ENCODE measurements at regions of chr12 and their contacts with region 1.

Region 1: DNA sequence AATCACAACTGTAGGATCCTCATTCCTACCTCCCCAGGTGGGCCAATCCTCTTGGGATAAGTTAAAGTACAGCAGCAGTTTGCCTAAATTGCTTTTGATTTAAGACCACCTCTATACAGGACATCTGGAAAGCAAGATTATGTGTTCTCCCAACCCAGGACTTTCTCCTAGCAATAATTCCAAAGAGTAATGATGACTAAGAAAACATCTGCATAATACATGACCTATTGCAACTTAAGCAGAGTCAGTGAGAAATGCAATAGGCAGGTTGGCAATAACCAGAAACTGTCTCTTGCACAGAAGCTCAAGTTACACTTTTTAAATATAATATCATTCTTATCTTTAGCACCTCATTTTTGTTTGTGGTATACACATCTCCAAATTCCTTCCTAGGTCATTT is 275.4 kb downstream of the TRHDE start:
- DNase-seq: no peak
- H3K4me3 Mint-ChIP-seq: no peak overlapping the region
- H3K27ac Mint-ChIP-seq: no peak overlapping the region
- H3K4me1 Mint-ChIP-seq: no peaks in the 10 kb centered on the region
- H3K27me3 Mint-ChIP-seq: no peaks in the 10 kb centered on the region
- CTCF ChIP-seq: no peak

Region 2: GRCh38 chr12:72346363-72346944 is 201.1 kb before region 1 on chr12:
- CTCF ChIA-PET with region 1: no interaction called
- intact Hi-C with region 1: loop called (anchors 10 kb)
- DNase-seq: peak; percentile 86
- H3K4me3 Mint-ChIP-seq: no peak overlapping the region
- H3K27ac Mint-ChIP-seq: no peak overlapping the region
- H3K4me1 Mint-ChIP-seq: peaks cover 8% of the 10 kb centered on the region
- H3K27me3 Mint-ChIP-seq: no peaks in the 10 kb centered on the region
- CTCF ChIP-seq: peak; percentile 45

Region 3: DNA sequence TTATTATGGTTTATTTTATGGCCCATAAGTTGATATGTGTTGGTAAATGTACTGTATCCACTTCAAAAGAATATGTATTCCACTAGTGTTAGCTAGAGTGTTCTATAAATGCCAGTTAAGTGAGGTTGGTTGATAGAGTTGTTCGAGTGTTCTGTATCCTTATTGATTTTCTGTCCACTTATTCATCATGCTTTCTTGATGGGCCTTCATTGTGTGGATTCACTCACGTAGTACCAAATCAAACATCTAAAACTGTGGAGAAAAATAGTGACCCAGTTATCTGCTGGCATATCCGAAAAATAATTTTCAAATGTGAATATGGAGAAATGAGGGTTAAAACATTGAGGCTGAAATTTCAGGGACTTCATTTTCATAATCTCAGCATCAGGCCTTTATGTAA is 45.0 kb before region 1 on chr12:
- CTCF ChIA-PET with region 1: no interaction called
- intact Hi-C with region 1: loop called (anchors 2 kb)
- DNase-seq: no peak
- H3K4me3 Mint-ChIP-seq: no peak overlapping the region
- H3K27ac Mint-ChIP-seq: no peak overlapping the region
- H3K4me1 Mint-ChIP-seq: no peaks in the 10 kb centered on the region
- H3K27me3 Mint-ChIP-seq: no peaks in the 10 kb centered on the region
- CTCF ChIP-seq: no peak

Region 4: DNA sequence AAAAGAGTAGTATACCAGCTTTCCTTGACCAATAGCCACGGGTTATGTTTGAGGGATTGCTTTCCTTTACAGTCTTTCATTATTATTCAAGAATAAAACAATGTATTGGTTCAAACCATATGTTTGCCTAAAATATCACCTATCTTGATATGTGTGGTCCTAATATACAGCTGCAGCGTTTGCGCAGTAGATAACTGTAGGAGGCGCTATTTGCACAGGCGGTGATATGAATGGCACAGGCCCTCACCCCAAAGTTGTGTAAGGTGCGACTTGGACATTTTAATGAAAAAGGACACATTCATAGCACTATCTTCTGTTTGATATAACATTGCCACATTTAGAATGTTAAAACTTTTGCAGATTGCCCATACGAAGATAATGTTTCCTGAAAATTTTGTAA is 23.0 kb after region 1 on chr12:
- CTCF ChIA-PET with region 1: no interaction called
- intact Hi-C with region 1: loop called (anchors 2 kb)
- DNase-seq: no peak
- H3K4me3 Mint-ChIP-seq: no peak overlapping the region
- H3K27ac Mint-ChIP-seq: no peak overlapping the region
- H3K4me1 Mint-ChIP-seq: no peaks in the 10 kb centered on the region
- H3K27me3 Mint-ChIP-seq: no peaks in the 10 kb centered on the region
- CTCF ChIP-seq: peak; percentile 25

Region 5: GRCh38 chr12:72622556-72622955 is 75.0 kb after region 1 on chr12:
- CTCF ChIA-PET with region 1: no interaction called
- intact Hi-C with region 1: no loop called
- DNase-seq: no peak
- H3K4me3 Mint-ChIP-seq: peak overlapping the region; percentile 22
- H3K27ac Mint-ChIP-seq: peak overlapping the region; percentile 23
- H3K4me1 Mint-ChIP-seq: peaks cover 43% of the 10 kb centered on the region
- H3K27me3 Mint-ChIP-seq: no peaks in the 10 kb centered on the region
- CTCF ChIP-seq: no peak

Measured in Calu3 (cell line).